Psoas muscle (tissue), 8 donors: ENCODE measurements at regions of chr18 and their contacts with region 1.

Region 1: GRCh38 chr18:51197661-51198424 is at the start of gene MEX3C:
- DNase-seq: peak; percentile 99 to 100
- ATAC-seq: peak; percentile 93 to 96 (median 94)
- H3K4me3 ChIP-seq: peak within 1 kb of the TSS; percentile 91
- H3K27ac ChIP-seq: peak within 1 kb of the TSS; percentile 91
- H3K4me1 ChIP-seq: peaks cover 26% of the 10 kb centered on the region
- H3K27me3 ChIP-seq: no peaks in the 10 kb centered on the region
- CTCF ChIP-seq: peak; percentile 46
- total RNA-seq, gene MEX3C: 13.6 to 15.1 (median 14.5) TPM

Region 2: DNA sequence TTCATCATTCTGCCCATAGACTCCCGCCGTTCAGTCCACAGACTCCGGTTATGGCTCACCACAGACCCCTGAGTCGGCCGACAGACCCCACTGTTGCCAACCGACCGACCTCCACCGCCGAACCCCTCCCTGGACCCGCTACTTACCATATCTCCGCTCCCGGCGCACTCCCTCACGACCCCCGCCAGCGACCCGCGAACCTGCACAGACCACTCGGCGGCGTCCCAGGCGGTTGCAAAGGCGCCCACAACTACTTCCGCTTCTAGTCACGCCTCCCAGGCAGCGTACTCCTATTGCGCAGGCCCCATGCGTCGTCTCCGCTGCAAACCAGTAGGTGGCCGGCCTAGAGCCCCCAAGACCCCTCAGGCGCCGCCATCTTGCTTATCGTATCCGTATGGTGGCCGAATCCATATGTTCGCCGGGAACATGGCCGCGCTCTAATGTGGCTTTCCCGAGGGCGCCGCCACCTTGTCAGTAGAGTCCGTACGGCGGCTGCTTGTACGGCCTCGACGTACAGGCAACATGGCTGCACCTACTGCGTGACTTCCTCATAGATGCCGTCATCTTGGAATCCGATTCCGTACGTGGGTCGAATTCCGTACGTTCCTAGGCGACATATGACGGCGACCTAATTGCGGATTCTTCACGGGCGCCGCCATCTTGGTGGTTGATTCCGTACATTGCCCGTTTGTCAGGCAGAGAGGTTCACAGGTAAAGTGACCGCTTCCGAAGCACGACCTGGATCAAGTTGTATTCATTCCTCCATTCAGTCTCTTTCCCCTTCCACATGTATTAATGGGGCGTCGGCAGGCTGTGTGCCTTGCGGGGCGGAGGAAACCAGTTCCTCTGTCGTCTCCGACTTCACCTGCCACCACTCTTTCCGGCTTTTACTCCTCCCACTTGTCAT is 910.1 kb before region 1 on chr18 and contains the start of gene CXXC1:
- intact Hi-C with region 1: loop called in 1 of 2 experiments (anchors 10 kb)
- DNase-seq: peak; percentile 97 to 98
- ATAC-seq: peak; percentile 95 to 97 (median 96)
- H3K4me3 ChIP-seq: peak within 1 kb of the TSS; percentile 75
- H3K27ac ChIP-seq: peak within 1 kb of the TSS; percentile 91
- H3K4me1 ChIP-seq: no peaks in the 10 kb centered on the region
- H3K27me3 ChIP-seq: no peaks in the 10 kb centered on the region
- CTCF ChIP-seq: peak; percentile 48
- total RNA-seq, gene CXXC1: 20.0 to 30.9 (median 21.7) TPM

Region 3: DNA sequence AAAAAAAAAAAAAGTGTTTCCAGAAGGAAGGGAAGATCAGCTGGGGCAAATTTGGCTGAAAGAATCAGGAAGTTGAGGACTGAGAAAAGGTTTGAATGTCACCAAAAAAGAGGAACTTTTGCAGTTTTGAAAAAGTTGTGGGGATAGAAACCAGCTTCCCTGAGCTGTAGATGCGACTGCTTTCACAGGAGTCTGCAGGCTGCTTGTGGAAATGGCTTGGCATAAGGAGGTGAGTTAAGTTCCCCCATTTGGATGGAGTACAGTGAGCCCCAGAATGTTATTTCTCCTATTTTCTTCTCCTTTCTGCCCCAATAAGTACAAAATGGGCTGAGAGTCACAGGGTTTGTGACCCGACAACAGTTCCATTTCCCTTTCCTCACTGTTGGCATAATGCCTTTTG is 335.4 kb before region 1 on chr18:
- intact Hi-C with region 1: no loop called
- DNase-seq: no peak
- ATAC-seq: peak in 1 of 4 donors; percentile 19
- H3K4me3 ChIP-seq: no peak overlapping the region
- H3K27ac ChIP-seq: no peak overlapping the region
- H3K4me1 ChIP-seq: peaks cover 9% of the 10 kb centered on the region
- H3K27me3 ChIP-seq: no peaks in the 10 kb centered on the region
- CTCF ChIP-seq: no peak

Region 4: GRCh38 chr18:50967714-50968661 is 229.9 kb before region 1 on chr18 and contains the start of gene ELAC1:
- intact Hi-C with region 1: loop called in 1 of 2 experiments (anchors 5 kb)
- DNase-seq: peak; percentile 83 to 90
- ATAC-seq: peak; percentile 93 to 97 (median 95)
- H3K4me3 ChIP-seq: peak within 1 kb of the TSS; percentile 89
- H3K27ac ChIP-seq: peak within 1 kb of the TSS; percentile 97
- H3K4me1 ChIP-seq: peaks cover 23% of the 10 kb centered on the region
- H3K27me3 ChIP-seq: no peaks in the 10 kb centered on the region
- CTCF ChIP-seq: peak; percentile 5
- total RNA-seq, gene ELAC1: 2.8 to 5.4 (median 3.8) TPM

Region 5: GRCh38 chr18:51255693-51256092 is 57.9 kb after region 1 on chr18:
- intact Hi-C with region 1: no loop called
- DNase-seq: no peak
- ATAC-seq: no peak
- H3K4me3 ChIP-seq: no peak overlapping the region
- H3K27ac ChIP-seq: no peak overlapping the region
- H3K4me1 ChIP-seq: no peaks in the 10 kb centered on the region
- H3K27me3 ChIP-seq: peaks cover 0 to 3% (median 0%) of the 10 kb centered on the region in 3 donors
- CTCF ChIP-seq: no peak

Region 6: DNA sequence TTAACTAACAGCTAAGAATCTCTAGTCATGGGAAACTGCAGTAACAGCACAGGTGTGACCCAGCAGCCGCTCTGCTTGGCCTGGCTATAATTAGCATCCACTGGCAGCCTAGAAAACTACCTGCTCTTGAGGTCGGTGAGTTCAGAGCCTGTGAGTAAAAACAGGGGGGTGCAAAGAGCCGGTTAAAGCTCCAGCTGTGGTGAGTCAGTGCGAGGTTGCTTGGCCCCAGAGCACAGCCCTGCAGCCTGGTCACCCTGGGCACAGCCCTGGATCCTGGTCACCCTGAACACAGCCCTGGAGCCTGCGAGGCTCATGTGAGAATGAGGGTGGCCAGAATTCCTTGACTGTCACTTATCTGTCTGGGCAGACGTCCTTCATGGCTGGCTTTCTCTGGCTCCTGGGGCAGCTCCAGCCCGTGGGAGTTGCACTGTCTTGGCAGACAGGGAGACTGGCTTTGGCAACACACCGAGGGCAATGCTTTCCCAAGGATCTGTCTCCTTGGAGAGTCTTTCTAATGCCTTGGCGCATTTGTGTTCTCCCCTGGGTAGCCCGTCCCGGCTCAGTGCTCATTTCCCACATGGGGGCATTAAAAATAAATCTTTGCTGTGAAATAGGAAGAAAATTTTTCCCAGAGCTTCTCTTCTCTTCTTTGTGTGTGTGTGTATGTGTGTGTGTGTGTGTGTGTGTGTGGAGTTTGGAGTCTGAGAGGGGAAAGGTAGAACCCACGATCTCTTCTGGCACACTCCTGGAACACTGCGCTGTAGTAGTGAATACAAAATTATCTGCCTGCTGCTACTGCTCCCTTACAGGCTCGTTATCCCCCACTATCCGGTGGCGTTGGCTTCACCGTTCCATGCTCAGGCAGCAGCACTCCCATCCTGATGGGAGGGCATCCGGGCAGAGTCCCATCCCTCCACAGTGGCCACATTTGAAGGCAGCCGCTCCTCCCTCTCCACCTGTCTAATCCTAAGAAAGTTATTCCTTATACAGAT is 249.8 kb after region 1 on chr18:
- intact Hi-C with region 1: loop called in 1 of 2 experiments (anchors 5 kb)
- DNase-seq: peak; percentile 40 to 79
- ATAC-seq: peak; percentile 87 to 97 (median 93)
- H3K4me3 ChIP-seq: no peak overlapping the region
- H3K27ac ChIP-seq: peak overlapping the region; percentile 62
- H3K4me1 ChIP-seq: peaks cover 10% of the 10 kb centered on the region
- H3K27me3 ChIP-seq: peaks cover 0 to 2% (median 0%) of the 10 kb centered on the region in 3 donors
- CTCF ChIP-seq: no peak